ENCODE measurements at regions of chr1 and their contacts with region 1.

Region 1: GRCh38 chr1:84506002-84506728 is at the starts of genes GNG5 and SPATA1:
- DNase-seq: peak; percentile 94 to 98 (median 96)
- ATAC-seq: peak; percentile 95
- H3K4me3 ChIP-seq: peak within 1 kb of the TSS; percentile 94
- H3K4me3 Mint-ChIP-seq: peak within 1 kb of the TSS; percentile 94 to 100 (median 98)
- H3K27ac ChIP-seq: peak within 1 kb of the TSS; percentile 76
- H3K27ac Mint-ChIP-seq: peak within 1 kb of the TSS; percentile 93 to 99 (median 96)
- H3K4me1 ChIP-seq: peaks cover 15 to 27% of the 10 kb centered on the region in 2 donors
- H3K4me1 Mint-ChIP-seq: peaks cover 18 to 54% (median 50%) of the 10 kb centered on the region in 7 donors
- H3K27me3 ChIP-seq: no peaks in the 10 kb centered on the region
- H3K27me3 Mint-ChIP-seq: peaks cover 0 to 2% (median 0%) of the 10 kb centered on the region in 5 donors
- total RNA-seq, gene GNG5: 24.8 to 90.7 (median 28.9) TPM
- total RNA-seq, gene SPATA1: 1.7 to 3.6 (median 2.2) TPM in 4 of 5 experiments, not detected in the other

Region 2: DNA sequence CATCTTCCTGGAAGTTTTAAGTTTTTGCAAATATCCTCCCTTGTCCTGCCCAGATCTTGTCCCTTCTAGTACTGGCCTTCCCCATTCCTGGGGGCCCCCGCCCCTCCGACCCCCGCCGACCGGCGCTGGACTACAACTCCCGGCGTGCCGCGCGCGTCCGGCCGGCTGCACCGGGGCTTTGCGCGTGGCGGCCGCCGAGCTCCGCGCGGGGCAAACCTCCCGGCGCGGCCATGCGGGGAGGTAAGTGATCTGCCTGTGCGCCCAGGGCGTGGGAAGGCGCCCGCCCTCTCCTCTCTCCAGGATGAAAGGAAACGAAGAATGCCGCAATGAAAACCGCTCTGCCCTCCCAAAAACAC is 207.9 kb before region 1 on chr1:
- CTCF ChIA-PET with region 1: no interaction called
- POLR2A ChIA-PET with region 1: no interaction called
- intact Hi-C with region 1: loop called in 1 of 2 experiments (anchors 1 kb)
- DNase-seq: peak; percentile 40 to 65 (median 46)
- ATAC-seq: peak; percentile 88
- H3K4me3 ChIP-seq: peak overlapping the region; percentile 92
- H3K4me3 Mint-ChIP-seq: peak overlapping the region; percentile 83 to 95 (median 90)
- H3K27ac ChIP-seq: peak overlapping the region; percentile 69
- H3K27ac Mint-ChIP-seq: peak overlapping the region; percentile 67 to 85 (median 79)
- H3K4me1 ChIP-seq: peaks cover 4 to 25% of the 10 kb centered on the region in 2 donors
- H3K4me1 Mint-ChIP-seq: peaks cover 17 to 52% (median 42%) of the 10 kb centered on the region in 7 donors
- H3K27me3 ChIP-seq: no peaks in the 10 kb centered on the region
- H3K27me3 Mint-ChIP-seq: peaks cover 0 to 16% (median 6%) of the 10 kb centered on the region in 5 donors

Region 3: GRCh38 chr1:84478876-84479868 is 27.0 kb before region 1 on chr1 and contains the start of gene RPF1:
- CTCF ChIA-PET with region 1: interaction called, 5 read pairs
- POLR2A ChIA-PET with region 1: interaction called, 60 read pairs
- intact Hi-C with region 1: loop called (anchors 1 kb)
- DNase-seq: peak; percentile 61 to 88 (median 83)
- ATAC-seq: peak; percentile 97
- H3K4me3 ChIP-seq: peak within 1 kb of the TSS; percentile 72
- H3K4me3 Mint-ChIP-seq: peak within 1 kb of the TSS; percentile 88 to 100 (median 98)
- H3K27ac ChIP-seq: peak within 1 kb of the TSS; percentile 80
- H3K27ac Mint-ChIP-seq: peak within 1 kb of the TSS; percentile 98 to 100 (median 99)
- H3K4me1 ChIP-seq: peaks cover 22 to 28% of the 10 kb centered on the region in 2 donors
- H3K4me1 Mint-ChIP-seq: peaks cover 29 to 60% (median 49%) of the 10 kb centered on the region in 7 donors
- H3K27me3 ChIP-seq: peaks cover 0 to 7% of the 10 kb centered on the region in 2 donors
- H3K27me3 Mint-ChIP-seq: peaks cover 21 to 35% (median 26%) of the 10 kb centered on the region in 5 donors
- total RNA-seq, gene RPF1: 35.5 to 52.3 (median 44.1) TPM

Region 4: DNA sequence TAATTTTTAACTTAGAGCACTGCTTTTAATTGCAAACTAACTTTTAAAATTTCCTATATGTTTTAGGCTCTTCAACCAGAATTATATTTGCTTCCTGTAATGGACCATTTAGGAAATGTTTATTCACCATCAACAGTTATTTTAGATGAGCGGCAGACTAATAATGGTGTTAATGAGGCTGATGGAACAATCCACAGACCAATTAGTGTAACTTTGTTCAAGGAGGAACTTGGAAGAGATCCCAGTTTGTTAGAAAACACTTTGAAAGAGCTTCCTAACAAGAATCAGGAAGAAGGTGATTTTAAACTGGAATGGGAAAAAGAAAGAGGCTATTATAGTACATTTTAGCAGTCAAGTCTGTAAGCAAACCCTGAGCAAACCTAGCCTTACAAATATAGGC is 19.6 kb after region 1 on chr1:
- CTCF ChIA-PET with region 1: no interaction called
- POLR2A ChIA-PET with region 1: no interaction called
- intact Hi-C with region 1: loop called in 1 of 2 experiments (anchors 2 kb)
- DNase-seq: no peak
- ATAC-seq: no peak
- H3K4me3 ChIP-seq: no peak overlapping the region
- H3K4me3 Mint-ChIP-seq: no peak overlapping the region
- H3K27ac ChIP-seq: no peak overlapping the region
- H3K27ac Mint-ChIP-seq: no peak overlapping the region
- H3K4me1 ChIP-seq: no peaks in the 10 kb centered on the region
- H3K4me1 Mint-ChIP-seq: peaks cover 0 to 3% (median 0%) of the 10 kb centered on the region in 7 donors
- H3K27me3 ChIP-seq: no peaks in the 10 kb centered on the region
- H3K27me3 Mint-ChIP-seq: no peaks in the 10 kb centered on the region

Region 5: GRCh38 chr1:84620720-84621313 is 114.7 kb after region 1 on chr1:
- CTCF ChIA-PET with region 1: interaction called, 3 read pairs
- POLR2A ChIA-PET with region 1: no interaction called
- intact Hi-C with region 1: loop called (anchors 1 to 2 kb)
- DNase-seq: peak; percentile 60 to 95 (median 84)
- ATAC-seq: peak; percentile 96
- H3K4me3 ChIP-seq: peak overlapping the region; percentile 85
- H3K4me3 Mint-ChIP-seq: peak overlapping the region; percentile 85 to 97 (median 92)
- H3K27ac ChIP-seq: peak overlapping the region; percentile 68
- H3K27ac Mint-ChIP-seq: peak overlapping the region in 6 of 9 donors; percentile 53 to 89 (median 82)
- H3K4me1 ChIP-seq: peaks cover 0 to 3% of the 10 kb centered on the region in 2 donors
- H3K4me1 Mint-ChIP-seq: peaks cover 0 to 18% (median 5%) of the 10 kb centered on the region in 7 donors
- H3K27me3 ChIP-seq: no peaks in the 10 kb centered on the region
- H3K27me3 Mint-ChIP-seq: peaks cover 0 to 7% (median 0%) of the 10 kb centered on the region in 5 donors

Region 6: DNA sequence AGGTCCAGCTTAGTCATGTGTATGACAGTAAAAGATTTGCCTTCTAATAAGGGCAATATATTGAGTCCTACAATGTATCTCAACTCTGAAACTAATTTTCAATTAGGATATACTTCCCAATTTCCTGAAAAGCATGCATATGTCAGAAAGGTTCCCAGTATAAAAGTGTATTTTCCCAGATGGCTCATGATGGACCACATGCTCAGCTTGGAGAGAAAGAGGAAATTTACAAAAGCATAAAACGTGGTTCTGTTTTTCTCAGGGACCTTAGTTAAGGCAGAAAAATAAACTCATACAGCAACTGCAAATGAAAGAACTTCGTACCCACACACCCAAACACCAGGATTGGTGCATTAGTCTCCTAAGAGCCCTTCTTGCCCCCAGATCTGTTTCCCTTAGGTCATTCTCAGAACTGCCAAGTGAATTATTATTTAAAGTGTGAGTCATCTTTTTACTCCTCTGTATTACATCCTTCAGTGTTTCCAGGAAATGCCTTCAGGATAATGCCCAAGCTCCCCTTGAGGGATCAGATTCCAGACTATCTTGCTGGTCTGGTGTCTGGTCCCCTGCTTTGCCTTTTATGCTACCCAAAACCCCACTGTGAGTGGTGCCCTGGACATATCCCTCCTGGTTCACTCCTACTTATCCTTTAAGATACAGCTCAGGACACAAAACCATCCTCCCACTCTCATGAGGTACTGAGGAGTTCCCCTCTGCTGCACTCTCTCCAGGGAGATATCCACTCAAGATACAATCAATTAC is 126.7 kb after region 1 on chr1:
- CTCF ChIA-PET with region 1: no interaction called
- POLR2A ChIA-PET with region 1: no interaction called
- intact Hi-C with region 1: no loop called
- DNase-seq: no peak
- ATAC-seq: no peak
- H3K4me3 ChIP-seq: no peak overlapping the region
- H3K4me3 Mint-ChIP-seq: no peak overlapping the region
- H3K27ac ChIP-seq: no peak overlapping the region
- H3K27ac Mint-ChIP-seq: no peak overlapping the region
- H3K4me1 ChIP-seq: no peaks in the 10 kb centered on the region
- H3K4me1 Mint-ChIP-seq: peaks cover 0 to 8% (median 0%) of the 10 kb centered on the region in 7 donors
- H3K27me3 ChIP-seq: no peaks in the 10 kb centered on the region
- H3K27me3 Mint-ChIP-seq: peaks cover 0 to 11% (median 7%) of the 10 kb centered on the region in 5 donors

Region 7: GRCh38 chr1:85048296-85049064 is 542.3 kb after region 1 on chr1 and contains the start of gene MCOLN3:
- CTCF ChIA-PET with region 1: no interaction called
- POLR2A ChIA-PET with region 1: no interaction called
- intact Hi-C with region 1: loop called in 1 of 2 experiments (anchors 10 kb)
- DNase-seq: peak in 7 of 9 donors; percentile 9 to 56 (median 24)
- ATAC-seq: peak; percentile 67
- H3K4me3 ChIP-seq: peak within 1 kb of the TSS; percentile 38
- H3K4me3 Mint-ChIP-seq: peak within 1 kb of the TSS; percentile 70 to 86 (median 80)
- H3K27ac ChIP-seq: no peak within 1 kb of the TSS
- H3K27ac Mint-ChIP-seq: peak within 1 kb of the TSS in 1 of 9 donors; percentile 55
- H3K4me1 ChIP-seq: peaks cover 10 to 21% of the 10 kb centered on the region in 2 donors
- H3K4me1 Mint-ChIP-seq: peaks cover 7 to 35% (median 29%) of the 10 kb centered on the region in 7 donors
- H3K27me3 ChIP-seq: peaks cover 11 to 13% of the 10 kb centered on the region in 2 donors
- H3K27me3 Mint-ChIP-seq: peaks cover 47 to 60% (median 54%) of the 10 kb centered on the region in 5 donors
- total RNA-seq, gene MCOLN3: 0.77 to 11.1 (median 0.95) TPM

Measured in naive thymus-derived CD4-positive, alpha-beta T cell (primary cell).